Calu3 (cell line): ENCODE measurements at regions of chr5 and their contacts with region 1.

Region 1: GRCh38 chr5:151080623-151081430 is at the start of gene TNIP1:
- DNase-seq: peak; percentile 99
- H3K4me3 Mint-ChIP-seq: peak within 1 kb of the TSS; percentile 75
- H3K27ac Mint-ChIP-seq: peak within 1 kb of the TSS; percentile 85
- H3K4me1 Mint-ChIP-seq: peaks cover 83% of the 10 kb centered on the region
- H3K27me3 Mint-ChIP-seq: no peaks in the 10 kb centered on the region
- CTCF ChIP-seq: no peak
- total RNA-seq, gene TNIP1: 321 and 339 TPM in 2 replicates

Region 2: GRCh38 chr5:151037561-151038411 is 43.0 kb before region 1 on chr5:
- CTCF ChIA-PET with region 1: no interaction called
- intact Hi-C with region 1: no loop called
- DNase-seq: no peak
- H3K4me3 Mint-ChIP-seq: no peak overlapping the region
- H3K27ac Mint-ChIP-seq: peak overlapping the region; percentile 27
- H3K4me1 Mint-ChIP-seq: peaks cover 14% of the 10 kb centered on the region
- H3K27me3 Mint-ChIP-seq: no peaks in the 10 kb centered on the region
- CTCF ChIP-seq: no peak

Region 3: GRCh38 chr5:151093476-151093889 is 12.7 kb after region 1 on chr5:
- CTCF ChIA-PET with region 1: interaction called, 5 read pairs
- intact Hi-C with region 1: loop called (anchors 1 kb)
- DNase-seq: peak; percentile 42
- H3K4me3 Mint-ChIP-seq: peak overlapping the region; percentile 26
- H3K27ac Mint-ChIP-seq: peak overlapping the region; percentile 86
- H3K4me1 Mint-ChIP-seq: peaks cover 70% of the 10 kb centered on the region
- H3K27me3 Mint-ChIP-seq: no peaks in the 10 kb centered on the region
- CTCF ChIP-seq: no peak